ENCODE measurements at regions of chr1 and their contacts with region 1.

Region 1: GRCh38 chr1:110780600-110781484 is 92.1 kb upstream of the CD53 start:
- DNase-seq: peak; percentile 68
- H3K4me3 Mint-ChIP-seq: no peak overlapping the region
- H3K27ac Mint-ChIP-seq: no peak overlapping the region
- H3K4me1 Mint-ChIP-seq: peaks cover 19% of the 10 kb centered on the region
- H3K27me3 Mint-ChIP-seq: no peaks in the 10 kb centered on the region

Region 2: GRCh38 chr1:110412576-110412975 is 368.3 kb before region 1 on chr1:
- intact Hi-C with region 1: loop called (anchors 10 kb)
- DNase-seq: peak; percentile 46
- H3K4me3 Mint-ChIP-seq: no peak overlapping the region
- H3K27ac Mint-ChIP-seq: no peak overlapping the region
- H3K4me1 Mint-ChIP-seq: peaks cover 13% of the 10 kb centered on the region
- H3K27me3 Mint-ChIP-seq: peaks cover 5% of the 10 kb centered on the region

Region 3: GRCh38 chr1:110554871-110555801 is 225.7 kb before region 1 on chr1:
- intact Hi-C with region 1: loop called (anchors 2 kb)
- DNase-seq: peak; percentile 45
- H3K4me3 Mint-ChIP-seq: peak overlapping the region; percentile 7
- H3K27ac Mint-ChIP-seq: no peak overlapping the region
- H3K4me1 Mint-ChIP-seq: no peaks in the 10 kb centered on the region
- H3K27me3 Mint-ChIP-seq: peaks cover 57% of the 10 kb centered on the region

Region 4: DNA sequence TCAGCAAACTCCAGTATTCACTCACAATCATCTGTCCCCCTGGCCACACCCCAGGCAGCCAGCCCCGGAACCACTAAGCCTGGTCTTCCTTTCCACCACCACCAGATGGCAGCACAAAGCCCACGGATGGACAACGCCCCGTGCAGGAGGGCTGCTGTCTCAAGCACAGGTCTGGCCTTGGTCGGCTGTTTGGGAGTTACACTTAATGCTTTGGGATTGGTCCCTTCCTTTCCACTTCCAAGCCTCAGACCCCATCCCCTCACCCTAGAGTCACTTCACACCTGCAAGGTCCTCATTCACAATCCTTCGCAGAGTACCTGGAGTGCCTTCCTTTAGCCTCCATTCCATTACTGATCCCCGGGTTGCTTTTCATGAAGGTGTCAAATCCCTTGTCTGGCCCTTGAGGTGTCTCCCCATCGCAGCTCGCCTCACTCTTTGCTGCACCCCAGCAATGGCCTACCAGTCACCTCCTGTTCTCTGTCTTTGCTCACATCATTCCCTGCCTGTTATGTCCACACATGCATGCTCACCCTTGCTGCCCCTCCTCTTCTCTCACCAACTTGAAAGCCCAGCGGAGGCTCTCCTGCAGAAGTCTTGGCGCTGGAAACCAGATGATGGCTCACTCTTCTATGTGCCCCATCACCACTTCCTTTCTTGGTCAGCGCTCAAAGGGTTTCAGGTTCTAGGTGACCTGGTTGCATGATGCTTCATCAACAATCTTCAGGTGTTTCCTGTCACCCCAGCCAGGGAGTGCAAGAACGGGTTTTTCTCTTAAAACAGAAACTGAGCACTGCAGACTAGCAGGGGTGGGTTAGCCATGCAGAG is 149.8 kb before region 1 on chr1:
- intact Hi-C with region 1: loop called (anchors 1 kb)
- DNase-seq: peak; percentile 84
- H3K4me3 Mint-ChIP-seq: no peak overlapping the region
- H3K27ac Mint-ChIP-seq: no peak overlapping the region
- H3K4me1 Mint-ChIP-seq: peaks cover 67% of the 10 kb centered on the region
- H3K27me3 Mint-ChIP-seq: no peaks in the 10 kb centered on the region

Region 5: GRCh38 chr1:110734133-110734680 is 46.6 kb before region 1 on chr1:
- intact Hi-C with region 1: no loop called
- DNase-seq: no peak
- H3K4me3 Mint-ChIP-seq: no peak overlapping the region
- H3K27ac Mint-ChIP-seq: no peak overlapping the region
- H3K4me1 Mint-ChIP-seq: no peaks in the 10 kb centered on the region
- H3K27me3 Mint-ChIP-seq: peaks cover 10% of the 10 kb centered on the region

Region 6: GRCh38 chr1:110766025-110766647 is 14.7 kb before region 1 on chr1:
- intact Hi-C with region 1: loop called (anchors 1 kb)
- DNase-seq: peak; percentile 34
- H3K4me3 Mint-ChIP-seq: no peak overlapping the region
- H3K27ac Mint-ChIP-seq: no peak overlapping the region
- H3K4me1 Mint-ChIP-seq: peaks cover 14% of the 10 kb centered on the region
- H3K27me3 Mint-ChIP-seq: peaks cover 17% of the 10 kb centered on the region

Region 7: GRCh38 chr1:110990536-110990935 is 209.7 kb after region 1 on chr1:
- intact Hi-C with region 1: loop called (anchors 1 kb)
- DNase-seq: no peak
- H3K4me3 Mint-ChIP-seq: no peak overlapping the region
- H3K27ac Mint-ChIP-seq: no peak overlapping the region
- H3K4me1 Mint-ChIP-seq: peaks cover 5% of the 10 kb centered on the region
- H3K27me3 Mint-ChIP-seq: peaks cover 25% of the 10 kb centered on the region

Measured in activated T-helper 1 cell treated with anti-CD3 and anti-CD28 coated beads, Interleukin-12 subunit alpha, Interleukin-12 subunit beta, Interleukin-2, Interleukin-4 antibody, amounts not matched to agents 30 ng/mL and 10 ng/mL and 1 ng/mL, durations not matched to agents 14 hours and 24 hours and 36 hours (primary cell).